ENCODE measurements at regions of chr5 and their contacts with region 1.

Region 1: GRCh38 chr5:171850324-171851285 is 65.0 kb downstream of the SMIM23 start:
- DNase-seq: peak; percentile 40
- H3K27ac ChIP-seq: no peak overlapping the region
- CTCF ChIP-seq: no peak; the same call in 1 of the 2 replicates

Region 2: DNA sequence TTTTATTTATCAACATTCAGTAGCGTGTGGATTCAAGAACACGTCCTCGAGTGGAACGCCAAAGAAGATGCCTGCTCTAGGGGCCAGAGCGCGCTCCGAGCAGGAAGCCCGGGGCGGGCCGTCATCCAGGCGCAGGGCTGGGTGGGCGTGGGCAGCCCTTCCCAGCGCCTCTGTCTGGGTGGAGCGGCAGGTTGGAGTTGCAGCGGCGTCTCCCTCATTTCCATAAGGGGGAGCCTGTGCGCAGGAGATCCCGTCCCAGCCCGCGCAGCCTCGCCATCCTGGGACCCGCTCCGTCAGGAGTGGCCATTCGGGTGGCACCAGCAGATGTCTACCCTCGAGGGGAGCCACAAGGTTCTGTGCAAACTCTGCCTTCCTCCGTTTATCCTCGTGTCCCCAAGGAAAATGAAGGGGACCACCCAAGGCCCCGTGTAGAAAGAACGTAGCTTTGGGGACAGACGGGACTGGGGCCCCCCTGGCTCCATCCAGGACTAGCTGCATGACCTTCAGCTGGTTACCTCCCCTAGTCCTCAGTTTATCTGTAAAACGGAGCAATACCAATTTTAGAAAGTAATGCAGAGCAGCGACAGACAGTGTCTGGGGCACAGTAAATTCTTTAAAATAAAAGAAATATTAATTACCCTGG is 220.5 kb before region 1 on chr5:
- CTCF ChIA-PET with region 1: interaction called, 10 read pairs
- POLR2A ChIA-PET with region 1: no interaction called
- DNase-seq: peak; percentile 87
- H3K27ac ChIP-seq: no peak overlapping the region
- CTCF ChIP-seq: peak; percentile 79

Region 3: GRCh38 chr5:171835077-171835476 is 15.5 kb before region 1 on chr5:
- CTCF ChIA-PET with region 1: no interaction called
- POLR2A ChIA-PET with region 1: no interaction called
- DNase-seq: peak; percentile 53
- H3K27ac ChIP-seq: no peak overlapping the region
- CTCF ChIP-seq: no peak

Measured in RWPE1 (cell line).